AG04450 (cell line): ENCODE measurements at regions of chr17 and their contacts with region 1.

Region 1: GRCh38 chr17:56319517-56319916 is 166.2 kb downstream of the ANKFN1 start:
- DNase-seq: peak; percentile 29
- H3K4me3 ChIP-seq: no peak overlapping the region
- H3K27ac ChIP-seq: no peak overlapping the region
- H3K27me3 ChIP-seq: no peaks in the 10 kb centered on the region
- CTCF ChIP-seq: peak; percentile 66

Region 2: GRCh38 chr17:56125830-56126819 is 193.4 kb before region 1 on chr17:
- CTCF ChIA-PET with region 1: interaction called, 56 read pairs
- POLR2A ChIA-PET with region 1: no interaction called
- DNase-seq: peak; percentile 30
- H3K4me3 ChIP-seq: no peak overlapping the region
- H3K27ac ChIP-seq: no peak overlapping the region
- H3K27me3 ChIP-seq: no peaks in the 10 kb centered on the region
- CTCF ChIP-seq: peak; percentile 80

Region 3: DNA sequence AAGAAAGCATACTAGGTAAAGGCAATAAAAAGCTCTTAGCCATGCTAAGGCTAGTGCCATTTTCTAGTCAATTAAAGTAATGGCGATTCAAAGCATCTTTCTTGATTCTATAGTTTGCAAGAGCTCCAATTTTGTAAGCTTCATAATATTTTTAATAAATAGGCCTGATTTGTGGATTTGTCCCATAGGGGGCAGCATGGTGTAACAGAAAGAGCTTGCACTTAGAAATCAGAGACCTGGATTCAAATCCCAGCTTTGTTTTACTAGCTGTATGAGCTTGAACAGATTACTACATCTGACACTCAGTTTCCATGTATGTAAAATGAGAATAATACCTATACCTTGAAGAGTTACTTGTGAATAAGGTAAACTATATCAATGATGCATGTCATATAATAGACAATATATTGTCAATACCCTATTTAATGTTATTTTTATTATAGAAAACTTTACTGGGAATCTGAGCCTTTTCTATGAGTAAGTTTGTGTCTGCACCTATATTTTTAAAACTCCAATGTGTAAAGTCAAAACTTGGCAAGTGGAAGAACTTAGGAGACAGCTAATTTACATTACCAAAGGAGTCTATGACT is 180.4 kb after region 1 on chr17:
- CTCF ChIA-PET with region 1: no interaction called
- POLR2A ChIA-PET with region 1: no interaction called
- DNase-seq: no peak
- H3K4me3 ChIP-seq: no peak overlapping the region
- H3K27ac ChIP-seq: no peak overlapping the region
- H3K27me3 ChIP-seq: no peaks in the 10 kb centered on the region
- CTCF ChIP-seq: peak; percentile 50